Naive thymus-derived CD4-positive, alpha-beta T cell (primary cell): ENCODE measurements at regions of chr6 and their contacts with region 1.

Region 1: DNA sequence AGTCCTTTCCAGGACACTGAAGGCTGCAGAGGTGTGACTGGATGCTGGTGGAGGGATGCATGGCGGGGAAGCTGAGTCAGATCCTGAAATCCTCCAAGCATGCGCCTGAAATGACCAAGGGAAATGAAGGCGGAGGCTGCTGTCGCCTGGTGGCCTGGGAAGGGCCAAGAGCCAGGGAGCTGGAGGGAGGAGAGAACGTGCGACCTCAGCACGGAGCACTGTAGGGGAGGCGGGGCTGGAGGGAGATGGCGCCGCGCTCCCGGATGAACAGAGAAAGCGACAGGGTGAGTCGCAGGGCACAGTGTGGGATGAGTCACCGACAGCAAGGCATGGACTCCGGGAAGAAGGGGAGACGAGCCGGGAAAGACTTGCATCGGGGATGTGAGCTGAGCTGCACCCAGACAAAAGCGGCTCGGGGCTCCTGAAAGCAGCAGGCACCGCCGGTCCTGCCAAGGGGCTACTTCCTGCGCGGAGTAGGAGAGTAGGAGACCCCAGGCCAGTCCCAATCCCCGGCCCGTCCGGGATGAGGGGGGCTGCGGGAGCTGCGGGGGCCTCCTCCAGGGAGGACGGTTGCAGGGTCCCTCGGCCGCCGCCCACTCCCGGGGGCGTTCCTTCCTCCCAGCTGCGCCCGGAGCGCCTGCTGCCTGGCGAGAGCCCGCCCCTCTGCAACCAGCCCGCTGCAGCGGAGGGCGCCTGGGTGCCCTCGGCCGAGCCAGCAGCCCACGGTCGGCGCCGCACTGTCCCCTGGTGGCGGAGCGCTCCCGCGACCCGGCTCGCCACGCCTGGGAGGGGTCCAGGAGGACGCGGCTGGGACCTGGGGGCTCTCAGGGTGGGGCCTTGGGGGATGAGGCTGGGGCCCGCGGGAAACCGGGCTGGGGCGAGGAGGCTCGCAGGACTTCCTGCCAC is 11.0 kb upstream of the NQO2 start:
- DNase-seq: peak in 8 of 9 donors; percentile 68 to 84 (median 78)
- ATAC-seq: peak; percentile 87
- H3K4me3 ChIP-seq: peak overlapping the region; percentile 76
- H3K4me3 Mint-ChIP-seq: peak overlapping the region; percentile 88 to 98 (median 96)
- H3K27ac ChIP-seq: peak overlapping the region; percentile 94
- H3K27ac Mint-ChIP-seq: peak overlapping the region; percentile 94 to 100 (median 100)
- H3K4me1 ChIP-seq: peaks cover 14% of the 10 kb centered on the region in 2 donors
- H3K4me1 Mint-ChIP-seq: peaks cover 15 to 41% (median 30%) of the 10 kb centered on the region in 7 donors
- H3K27me3 ChIP-seq: no peaks in the 10 kb centered on the region
- H3K27me3 Mint-ChIP-seq: peaks cover 0 to 11% (median 0%) of the 10 kb centered on the region in 5 donors

Region 2: GRCh38 chr6:2706558-2706957 is 282.1 kb before region 1 on chr6:
- CTCF ChIA-PET with region 1: no interaction called
- POLR2A ChIA-PET with region 1: no interaction called
- intact Hi-C with region 1: no loop called
- DNase-seq: no peak
- ATAC-seq: no peak
- H3K4me3 ChIP-seq: no peak overlapping the region
- H3K4me3 Mint-ChIP-seq: no peak overlapping the region
- H3K27ac ChIP-seq: no peak overlapping the region
- H3K27ac Mint-ChIP-seq: no peak overlapping the region
- H3K4me1 ChIP-seq: no peaks in the 10 kb centered on the region
- H3K4me1 Mint-ChIP-seq: no peaks in the 10 kb centered on the region
- H3K27me3 ChIP-seq: no peaks in the 10 kb centered on the region
- H3K27me3 Mint-ChIP-seq: peaks cover 0 to 28% (median 12%) of the 10 kb centered on the region in 5 donors

Region 3: DNA sequence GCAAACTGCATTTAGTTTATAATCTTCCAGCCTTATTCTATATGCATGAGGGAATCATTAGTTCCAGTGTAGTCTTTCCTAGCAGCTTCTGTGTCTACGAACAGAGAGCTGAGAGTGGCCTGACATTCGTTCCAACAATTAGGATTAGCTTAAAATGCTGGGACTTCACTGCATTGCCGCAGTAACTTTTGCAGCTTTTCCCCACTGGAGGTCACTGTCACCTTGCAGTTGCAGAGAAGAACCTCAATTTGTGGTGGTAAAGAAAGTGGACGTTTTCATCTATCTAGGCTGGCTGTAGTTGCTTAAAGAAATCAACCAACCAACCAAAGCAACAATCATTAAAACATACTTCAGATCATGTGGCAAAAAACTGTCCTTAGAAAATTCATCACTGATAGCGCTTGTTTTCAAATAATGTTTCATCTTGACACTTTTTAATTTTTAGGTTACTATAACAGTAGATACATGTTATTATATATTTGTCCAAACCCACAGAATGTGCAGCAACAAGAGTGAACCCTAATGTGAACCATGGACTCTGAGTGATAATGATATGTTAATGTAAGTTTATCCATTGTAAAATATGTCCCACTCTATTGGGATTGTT is 250.2 kb before region 1 on chr6:
- CTCF ChIA-PET with region 1: interaction called, 5 read pairs
- POLR2A ChIA-PET with region 1: no interaction called
- intact Hi-C with region 1: loop called in 1 of 2 experiments (anchors 1 kb)
- DNase-seq: peak in 8 of 9 donors; percentile 27 to 59 (median 50)
- ATAC-seq: peak; percentile 72
- H3K4me3 ChIP-seq: no peak overlapping the region
- H3K4me3 Mint-ChIP-seq: no peak overlapping the region
- H3K27ac ChIP-seq: no peak overlapping the region
- H3K27ac Mint-ChIP-seq: no peak overlapping the region
- H3K4me1 ChIP-seq: no peaks in the 10 kb centered on the region
- H3K4me1 Mint-ChIP-seq: peaks cover 0 to 5% (median 0%) of the 10 kb centered on the region in 7 donors
- H3K27me3 ChIP-seq: no peaks in the 10 kb centered on the region
- H3K27me3 Mint-ChIP-seq: peaks cover 0 to 21% (median 0%) of the 10 kb centered on the region in 5 donors

Region 4: DNA sequence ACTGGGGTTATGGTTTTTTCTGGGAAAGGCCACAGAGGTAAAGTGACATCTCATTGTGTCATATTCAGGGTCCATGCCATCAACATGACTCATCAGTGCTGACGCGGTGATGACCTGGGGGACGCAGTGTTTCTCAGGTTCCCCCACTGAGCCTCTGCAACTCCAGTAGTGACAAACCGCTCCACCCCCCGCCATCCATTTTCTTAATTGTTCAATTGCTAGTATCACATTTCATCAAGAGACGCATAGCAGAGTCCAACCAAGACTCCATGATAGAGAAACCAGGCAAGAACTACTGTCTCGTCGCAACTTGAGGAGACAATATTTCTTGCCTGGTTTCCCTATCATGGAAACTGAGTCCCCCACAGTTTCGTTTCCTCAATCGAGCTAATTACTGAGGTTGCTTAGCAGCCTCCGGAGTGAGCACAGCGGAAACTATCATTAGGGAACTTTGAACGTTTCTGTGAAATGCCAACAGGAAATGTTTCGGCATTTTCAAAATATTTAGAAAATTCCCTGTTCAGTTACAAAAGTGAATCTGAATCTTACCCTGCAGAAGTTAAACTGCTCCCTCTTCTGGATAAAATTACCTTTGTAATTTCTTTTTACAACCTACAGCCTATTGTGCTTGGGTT is 134.8 kb before region 1 on chr6:
- CTCF ChIA-PET with region 1: interaction called, 53 read pairs
- POLR2A ChIA-PET with region 1: interaction called, 45 read pairs
- intact Hi-C with region 1: loop called in 1 of 2 experiments (anchors 1 kb)
- DNase-seq: peak in 5 of 9 donors; percentile 23 to 70 (median 40)
- ATAC-seq: peak; percentile 61
- H3K4me3 ChIP-seq: peak overlapping the region; percentile 53
- H3K4me3 Mint-ChIP-seq: peak overlapping the region; percentile 65 to 97 (median 78)
- H3K27ac ChIP-seq: peak overlapping the region; percentile 65
- H3K27ac Mint-ChIP-seq: peak overlapping the region; percentile 79 to 100 (median 98)
- H3K4me1 ChIP-seq: peaks cover 59 to 61% of the 10 kb centered on the region in 2 donors
- H3K4me1 Mint-ChIP-seq: peaks cover 42 to 74% (median 71%) of the 10 kb centered on the region in 7 donors
- H3K27me3 ChIP-seq: no peaks in the 10 kb centered on the region
- H3K27me3 Mint-ChIP-seq: no peaks in the 10 kb centered on the region

Region 5: GRCh38 chr6:2931970-2932748 is 56.5 kb before region 1 on chr6:
- CTCF ChIA-PET with region 1: interaction called, 45 read pairs
- POLR2A ChIA-PET with region 1: interaction called, 440 read pairs
- intact Hi-C with region 1: loop called in 1 of 2 experiments (anchors 1 kb)
- DNase-seq: peak; percentile 61 to 87 (median 82)
- ATAC-seq: peak; percentile 99
- H3K4me3 ChIP-seq: no peak overlapping the region
- H3K4me3 Mint-ChIP-seq: peak overlapping the region in 8 of 10 donors; percentile 28 to 71 (median 44)
- H3K27ac ChIP-seq: no peak overlapping the region
- H3K27ac Mint-ChIP-seq: peak overlapping the region in 8 of 9 donors; percentile 3 to 86 (median 60)
- H3K4me1 ChIP-seq: peaks cover 8 to 20% of the 10 kb centered on the region in 2 donors
- H3K4me1 Mint-ChIP-seq: peaks cover 8 to 42% (median 26%) of the 10 kb centered on the region in 7 donors
- H3K27me3 ChIP-seq: no peaks in the 10 kb centered on the region
- H3K27me3 Mint-ChIP-seq: peaks cover 0 to 10% (median 0%) of the 10 kb centered on the region in 5 donors

Region 6: GRCh38 chr6:2999618-3000557 is 11.2 kb after region 1 on chr6 and contains the start of gene NQO2:
- CTCF ChIA-PET with region 1: interaction called, 6 read pairs
- POLR2A ChIA-PET with region 1: interaction called, 40 read pairs
- intact Hi-C with region 1: loop called (anchors 1 kb)
- DNase-seq: peak; percentile 68 to 92 (median 81)
- ATAC-seq: peak; percentile 91
- H3K4me3 ChIP-seq: peak within 1 kb of the TSS; percentile 95
- H3K4me3 Mint-ChIP-seq: peak within 1 kb of the TSS; percentile 83 to 95 (median 90)
- H3K27ac ChIP-seq: peak within 1 kb of the TSS; percentile 88
- H3K27ac Mint-ChIP-seq: peak within 1 kb of the TSS; percentile 78 to 96 (median 88)
- H3K4me1 ChIP-seq: peaks cover 5 to 18% of the 10 kb centered on the region in 2 donors
- H3K4me1 Mint-ChIP-seq: peaks cover 11 to 35% (median 26%) of the 10 kb centered on the region in 7 donors
- H3K27me3 ChIP-seq: no peaks in the 10 kb centered on the region
- H3K27me3 Mint-ChIP-seq: peaks cover 0 to 5% (median 0%) of the 10 kb centered on the region in 5 donors
- total RNA-seq, gene NQO2: 8.1 to 34.6 (median 22.6) TPM

Region 7: GRCh38 chr6:3118353-3119039 is 129.8 kb after region 1 on chr6 and contains the start of gene BPHL:
- CTCF ChIA-PET with region 1: no interaction called
- POLR2A ChIA-PET with region 1: interaction called, 4 read pairs
- intact Hi-C with region 1: loop called (anchors 2 kb)
- DNase-seq: peak; percentile 97 to 100 (median 99)
- ATAC-seq: peak; percentile 99
- H3K4me3 ChIP-seq: peak within 1 kb of the TSS; percentile 91
- H3K4me3 Mint-ChIP-seq: peak within 1 kb of the TSS; percentile 77 to 93 (median 90)
- H3K27ac ChIP-seq: peak within 1 kb of the TSS; percentile 97
- H3K27ac Mint-ChIP-seq: peak within 1 kb of the TSS; percentile 82 to 97 (median 95)
- H3K4me1 ChIP-seq: peaks cover 0 to 4% of the 10 kb centered on the region in 2 donors
- H3K4me1 Mint-ChIP-seq: peaks cover 12 to 19% (median 18%) of the 10 kb centered on the region in 7 donors
- H3K27me3 ChIP-seq: no peaks in the 10 kb centered on the region
- H3K27me3 Mint-ChIP-seq: peaks cover 0 to 5% (median 0%) of the 10 kb centered on the region in 5 donors
- total RNA-seq, gene BPHL: 7.9 to 18.0 (median 10.0) TPM

Region 8: DNA sequence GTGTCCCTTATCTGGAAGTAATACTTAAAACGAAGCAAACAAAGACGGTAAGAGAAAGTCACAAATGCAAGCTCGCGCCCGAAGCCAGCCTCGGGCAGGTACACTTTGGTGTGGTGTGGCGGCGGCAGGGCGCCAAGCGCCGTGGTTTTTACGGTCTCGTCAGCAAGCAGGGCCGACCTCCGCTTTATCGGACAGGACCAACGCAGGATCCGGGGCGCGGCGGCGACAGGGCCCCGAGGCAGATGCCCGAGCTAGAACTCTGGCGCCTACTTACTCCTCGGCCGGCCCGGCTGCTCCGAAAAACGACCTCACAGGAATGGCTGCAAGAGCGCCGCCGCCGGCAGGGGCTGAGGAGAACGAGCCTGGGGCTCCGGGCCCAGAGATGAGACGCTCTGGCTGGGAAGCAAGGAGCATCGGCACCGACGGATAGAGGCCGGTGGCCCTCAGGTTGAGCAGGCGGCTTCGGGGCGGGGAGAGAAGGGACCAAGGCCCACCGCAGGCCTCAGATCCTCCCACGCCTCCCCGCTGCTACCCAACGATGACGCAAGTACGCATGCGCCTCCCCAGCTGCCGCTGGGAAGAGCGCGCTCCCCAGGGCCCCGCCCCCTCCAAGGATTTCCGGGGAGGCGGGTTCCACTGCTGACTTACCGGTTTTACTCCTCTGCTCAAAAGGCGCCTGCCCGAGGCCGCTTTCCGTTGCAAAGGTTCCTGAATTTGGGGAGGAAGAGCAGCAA is 1029.7 kb after region 1 on chr6:
- CTCF ChIA-PET with region 1: no interaction called
- POLR2A ChIA-PET with region 1: interaction called, 4 read pairs
- intact Hi-C with region 1: loop called (anchors 2 to 5 kb)
- DNase-seq: peak; percentile 91 to 98 (median 95)
- ATAC-seq: peak; percentile 83
- H3K4me3 ChIP-seq: peak overlapping the region; percentile 76
- H3K4me3 Mint-ChIP-seq: peak overlapping the region; percentile 86 to 99 (median 94)
- H3K27ac ChIP-seq: peak overlapping the region; percentile 95
- H3K27ac Mint-ChIP-seq: peak overlapping the region; percentile 95 to 100 (median 96)
- H3K4me1 ChIP-seq: peaks cover 27 to 39% of the 10 kb centered on the region in 2 donors
- H3K4me1 Mint-ChIP-seq: peaks cover 45 to 88% (median 70%) of the 10 kb centered on the region in 7 donors
- H3K27me3 ChIP-seq: no peaks in the 10 kb centered on the region
- H3K27me3 Mint-ChIP-seq: no peaks in the 10 kb centered on the region